Mammary epithelial cell (primary cell): ENCODE measurements at regions of chr15 and their contacts with region 1.

Region 1: GRCh38 chr15:34223904-34224596 is 766 bp upstream of the EMC4 start:
- DNase-seq: no peak
- H3K4me3 ChIP-seq: peak overlapping the region; percentile 61 to 82 (median 74)
- H3K27ac ChIP-seq: peak overlapping the region; percentile 75
- H3K4me1 ChIP-seq: peaks cover 6% of the 10 kb centered on the region
- H3K27me3 ChIP-seq: no peaks in the 10 kb centered on the region
- CTCF ChIP-seq: no peak

Region 2: GRCh38 chr15:34101366-34102175 is 122.5 kb before region 1 on chr15 and contains the starts of genes EMC7 and PGBD4:
- CTCF ChIA-PET with region 1: no interaction called
- dilution Hi-C with region 1: no loop called
- in situ Hi-C with region 1: loop called in 1 of 2 experiments (anchors 10 kb)
- intact Hi-C with region 1: loop called (anchors 1 kb)
- DNase-seq: peak; percentile 99
- H3K4me3 ChIP-seq: peak within 1 kb of the TSS; percentile 96 to 99 (median 96)
- H3K27ac ChIP-seq: peak within 1 kb of the TSS; percentile 74
- H3K4me1 ChIP-seq: peaks cover 14% of the 10 kb centered on the region
- H3K27me3 ChIP-seq: no peaks in the 10 kb centered on the region
- CTCF ChIP-seq: no peak
- total RNA-seq, gene EMC7: 28.3 to 75.8 TPM
- total RNA-seq, gene PGBD4: 1.3 to 2.1 TPM

Region 3: GRCh38 chr15:34259566-34259965 is 35.5 kb after region 1 on chr15:
- CTCF ChIA-PET with region 1: no interaction called
- dilution Hi-C with region 1: loop called (anchors 5 kb)
- in situ Hi-C with region 1: no loop called
- intact Hi-C with region 1: no loop called
- DNase-seq: no peak
- H3K4me3 ChIP-seq: no peak overlapping the region
- H3K27ac ChIP-seq: no peak overlapping the region
- H3K4me1 ChIP-seq: no peaks in the 10 kb centered on the region
- H3K27me3 ChIP-seq: no peaks in the 10 kb centered on the region
- CTCF ChIP-seq: no peak

Region 4: DNA sequence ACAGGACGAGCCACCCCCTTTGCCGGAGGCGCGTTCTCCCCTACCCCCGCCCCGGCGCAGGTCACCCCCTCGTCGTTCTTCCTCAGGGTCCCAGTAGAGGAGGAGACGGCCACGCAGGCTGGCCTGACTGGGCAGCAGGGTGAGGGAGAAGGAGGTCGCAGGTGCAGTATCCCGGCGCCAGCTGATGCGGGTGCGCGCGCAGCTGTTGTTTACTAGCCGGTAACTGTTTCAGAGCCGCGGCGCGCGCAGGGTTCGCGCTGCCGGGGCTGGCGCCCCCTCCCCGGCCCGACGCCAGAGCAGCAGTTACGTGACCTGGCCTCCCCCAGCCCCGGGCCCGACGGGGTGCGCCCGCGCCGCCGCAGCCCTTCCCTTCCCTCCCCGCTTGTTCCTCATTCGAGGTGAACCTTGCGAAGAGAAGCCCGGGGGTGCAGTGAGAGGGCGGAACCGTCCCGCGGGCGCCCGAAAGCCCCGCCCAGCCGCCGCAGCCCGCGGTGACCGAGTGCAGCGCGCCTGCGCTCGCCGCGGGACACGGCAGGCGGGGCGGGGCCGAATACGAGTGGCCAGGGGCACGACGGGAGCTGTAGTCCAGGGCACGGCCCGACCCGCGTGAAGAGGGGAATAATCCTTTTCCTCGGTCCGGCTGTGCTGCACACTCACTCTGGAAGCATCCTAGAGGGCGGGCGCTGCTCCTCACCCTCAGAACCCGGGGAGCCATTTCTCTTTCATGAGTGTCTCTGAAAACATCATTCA is 113.7 kb after region 1 on chr15 and contains the start of gene SLC12A6:
- CTCF ChIA-PET with region 1: no interaction called
- dilution Hi-C with region 1: no loop called
- in situ Hi-C with region 1: loop called in 1 of 2 experiments (anchors 25 kb)
- intact Hi-C with region 1: loop called (anchors 1 kb)
- DNase-seq: peak; percentile 91
- H3K4me3 ChIP-seq: peak within 1 kb of the TSS; percentile 74 to 95 (median 80)
- H3K27ac ChIP-seq: peak within 1 kb of the TSS; percentile 44
- H3K4me1 ChIP-seq: peaks cover 13% of the 10 kb centered on the region
- H3K27me3 ChIP-seq: no peaks in the 10 kb centered on the region
- CTCF ChIP-seq: no peak
- total RNA-seq, gene SLC12A6: 15.2 to 17.6 TPM

Region 5: GRCh38 chr15:34342737-34343575 is 118.9 kb after region 1 on chr15 and contains the starts of genes NOP10 and NUTM1:
- CTCF ChIA-PET with region 1: no interaction called
- dilution Hi-C with region 1: no loop called
- in situ Hi-C with region 1: loop called in 1 of 2 experiments (anchors 25 kb)
- intact Hi-C with region 1: loop called (anchors 1 kb)
- DNase-seq: peak; percentile 87
- H3K4me3 ChIP-seq: peak within 1 kb of the TSS; percentile 91 to 95 (median 94)
- H3K27ac ChIP-seq: peak within 1 kb of the TSS; percentile 87
- H3K4me1 ChIP-seq: peaks cover 3% of the 10 kb centered on the region
- H3K27me3 ChIP-seq: no peaks in the 10 kb centered on the region
- CTCF ChIP-seq: peak; percentile 95 to 96
- total RNA-seq, gene NOP10: 187 to 239 TPM
- total RNA-seq, gene NUTM1: not detected

Region 6: DNA sequence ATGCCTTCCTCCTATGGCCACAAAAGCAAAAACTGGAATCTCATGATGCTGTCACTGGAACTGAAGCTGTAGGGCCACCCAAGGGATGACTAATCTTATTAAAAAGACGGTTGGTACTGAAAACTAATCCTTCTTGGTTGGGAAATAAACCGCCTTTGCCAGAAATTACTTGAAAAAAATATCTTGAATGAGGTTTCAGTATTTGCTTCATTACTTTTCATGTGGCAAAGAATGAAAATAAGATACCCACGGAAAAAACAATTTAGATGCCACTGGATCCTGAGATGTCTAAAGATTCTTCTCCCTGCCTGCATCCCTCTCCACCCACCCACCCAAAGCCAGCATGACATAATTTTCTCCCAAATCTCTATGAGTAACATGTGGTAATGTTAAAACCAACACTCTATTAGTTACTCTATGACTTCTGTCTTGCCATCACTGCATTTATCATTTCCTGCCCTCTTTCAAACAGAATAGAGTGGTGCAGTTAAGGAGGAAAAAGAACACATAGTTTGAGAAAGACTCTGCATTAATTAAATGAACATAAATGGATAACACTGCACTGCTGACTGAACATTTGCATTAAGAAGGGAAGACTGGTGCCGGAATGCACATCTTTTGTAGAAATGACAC is 1433.7 kb after region 1 on chr15:
- CTCF ChIA-PET with region 1: no interaction called
- dilution Hi-C with region 1: no loop called
- in situ Hi-C with region 1: no loop called
- intact Hi-C with region 1: no loop called
- DNase-seq: peak; percentile 53
- H3K4me3 ChIP-seq: no peak overlapping the region
- H3K27ac ChIP-seq: no peak overlapping the region
- H3K4me1 ChIP-seq: no peaks in the 10 kb centered on the region
- H3K27me3 ChIP-seq: no peaks in the 10 kb centered on the region
- CTCF ChIP-seq: no peak